ENCODE measurements at regions of chr7 and their contacts with region 1.

Region 1: GRCh38 chr7:95527033-95527775 is 41.5 kb downstream of the ASB4 start:
- DNase-seq: peak; percentile 15
- H3K4me3 Mint-ChIP-seq: no peak overlapping the region
- H3K27ac Mint-ChIP-seq: no peak overlapping the region
- H3K4me1 Mint-ChIP-seq: no peaks in the 10 kb centered on the region
- H3K27me3 Mint-ChIP-seq: peaks cover 8% of the 10 kb centered on the region

Region 2: GRCh38 chr7:95690367-95690947 is 163.3 kb after region 1 on chr7:
- CTCF ChIA-PET with region 1: interaction called, 19 read pairs
- intact Hi-C with region 1: loop called (anchors 1 kb)
- DNase-seq: peak; percentile 9
- H3K4me3 Mint-ChIP-seq: no peak overlapping the region
- H3K27ac Mint-ChIP-seq: no peak overlapping the region
- H3K4me1 Mint-ChIP-seq: no peaks in the 10 kb centered on the region
- H3K27me3 Mint-ChIP-seq: peaks cover 2% of the 10 kb centered on the region

Region 3: DNA sequence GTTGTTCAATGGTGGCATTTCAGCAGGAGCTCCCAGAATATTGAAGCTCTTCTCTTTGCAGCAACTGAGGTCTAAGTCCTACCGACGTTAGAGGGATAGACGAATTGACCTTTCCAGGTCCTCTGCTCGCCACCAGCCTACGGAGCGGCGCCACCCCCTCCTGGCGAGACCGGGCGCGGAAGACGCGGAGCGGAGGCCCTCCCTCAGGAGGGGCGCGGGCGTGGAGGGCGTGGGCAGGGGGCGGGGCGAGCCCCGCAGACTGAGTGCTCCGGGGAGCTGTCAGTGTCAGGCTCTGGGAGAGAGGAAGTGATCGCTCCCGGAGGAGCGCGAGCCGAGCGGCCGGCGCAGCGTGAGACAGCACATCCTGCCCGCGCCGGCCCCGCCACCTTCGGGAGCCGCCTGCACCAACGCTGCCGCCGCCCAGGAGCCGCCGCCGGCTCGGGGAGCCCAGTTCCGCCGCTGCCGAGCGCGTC is 245.1 kb after region 1 on chr7 and contains the start of gene DYNC1I1:
- CTCF ChIA-PET with region 1: no interaction called
- intact Hi-C with region 1: no loop called
- DNase-seq: peak; percentile 27
- H3K4me3 Mint-ChIP-seq: peak within 1 kb of the TSS; percentile 66
- H3K27ac Mint-ChIP-seq: no peak within 1 kb of the TSS
- H3K4me1 Mint-ChIP-seq: peaks cover 5% of the 10 kb centered on the region
- H3K27me3 Mint-ChIP-seq: peaks cover 43% of the 10 kb centered on the region
- total RNA-seq, gene DYNC1I1: not detected

Region 4: DNA sequence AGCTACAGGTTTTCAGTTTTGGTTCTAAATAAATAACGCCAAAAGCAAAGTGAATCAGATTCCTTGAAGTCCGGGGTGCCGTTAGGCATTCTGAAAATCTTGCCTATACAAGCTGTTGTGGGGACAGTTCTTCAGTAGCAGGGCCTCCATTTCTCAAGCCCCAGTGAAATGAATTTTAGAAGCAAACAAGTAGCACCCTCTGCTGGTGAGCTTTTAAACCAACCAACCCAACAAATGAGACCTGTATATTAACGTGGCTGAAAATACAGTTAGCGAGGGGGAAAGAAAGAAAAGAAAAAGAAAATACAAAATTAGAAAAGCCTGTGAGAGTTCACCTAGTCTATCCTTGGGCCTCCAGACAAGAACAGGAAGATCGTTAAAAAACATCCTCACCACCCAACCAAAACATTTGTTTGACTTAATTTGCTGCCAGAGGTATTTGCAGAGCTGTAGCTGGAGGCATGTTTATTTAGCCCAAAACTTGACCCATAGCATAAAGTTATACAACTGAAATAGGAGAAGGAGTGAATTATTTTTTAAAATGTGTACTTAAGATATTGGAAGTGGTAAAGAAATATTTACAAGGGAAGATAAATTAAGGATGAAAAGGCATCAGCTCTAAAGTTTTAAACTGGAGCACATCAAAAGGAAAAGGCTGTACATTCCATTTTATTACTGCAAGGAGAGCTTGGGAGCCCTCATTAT is 344.0 kb after region 1 on chr7:
- CTCF ChIA-PET with region 1: no interaction called
- intact Hi-C with region 1: loop called (anchors 1 kb)
- DNase-seq: peak; percentile 23
- H3K4me3 Mint-ChIP-seq: no peak overlapping the region
- H3K27ac Mint-ChIP-seq: no peak overlapping the region
- H3K4me1 Mint-ChIP-seq: no peaks in the 10 kb centered on the region
- H3K27me3 Mint-ChIP-seq: peaks cover 5% of the 10 kb centered on the region

Measured in activated naive CD4-positive, alpha-beta T cell treated with anti-CD3 and anti-CD28 coated beads for 36 hours (primary cell).